ENCODE measurements at regions of chrX and their contacts with region 1.

Region 1: DNA sequence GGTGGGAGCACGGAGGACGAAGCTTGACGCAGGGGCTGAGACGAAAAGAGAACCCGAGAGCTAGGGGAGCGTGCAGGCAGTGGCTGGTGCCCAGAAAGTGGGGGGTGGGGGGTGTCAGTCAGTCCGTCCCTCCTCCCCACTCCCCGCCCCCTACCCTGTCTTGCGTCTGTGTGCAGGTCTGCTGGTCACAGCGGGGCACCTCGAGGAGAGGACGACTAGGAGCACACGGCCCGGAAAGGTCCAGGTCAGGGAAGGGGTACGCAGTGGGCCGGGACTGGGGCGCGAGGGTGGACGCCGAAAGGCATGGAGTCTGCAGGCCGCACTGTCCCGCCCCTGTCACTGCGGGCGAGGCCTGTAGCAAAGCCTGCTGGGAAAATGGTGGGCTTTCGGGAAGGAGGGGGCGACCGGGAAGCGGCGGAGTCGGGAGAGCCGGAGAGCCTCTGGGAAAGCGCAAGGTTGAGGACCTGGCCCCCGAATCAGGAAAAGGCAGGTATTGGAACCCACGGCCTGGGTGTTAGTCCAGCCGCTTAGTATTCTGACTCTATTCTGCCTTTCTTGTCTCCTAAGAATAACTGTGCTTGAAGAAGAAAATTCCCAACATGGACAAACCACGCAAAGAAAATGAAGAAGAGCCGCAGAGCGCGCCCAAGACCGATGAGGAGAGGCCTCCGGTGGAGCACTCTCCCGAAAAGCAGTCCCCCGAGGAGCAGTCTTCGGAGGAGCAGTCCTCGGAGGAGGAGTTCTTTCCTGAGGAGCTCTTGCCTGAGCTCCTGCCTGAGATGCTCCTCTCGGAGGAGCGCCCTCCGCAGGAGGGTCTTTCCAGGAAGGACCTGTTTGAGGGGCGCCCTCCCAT is 769 bp downstream of the TCEAL1 start:
- DNase-seq: peak; percentile 83
- ATAC-seq: peak; percentile 95

Region 2: GRCh38 chrX:103533511-103534216 is 95.9 kb before region 1 on chrX:
- intact Hi-C with region 1: loop called (anchors 10 kb)
- DNase-seq: peak; percentile 63
- ATAC-seq: peak; percentile 67

Region 3: GRCh38 chrX:103607364-103608305 is 21.9 kb before region 1 on chrX and contains the start of gene TCEAL3:
- intact Hi-C with region 1: loop called (anchors 2 kb)
- DNase-seq: peak; percentile 79
- ATAC-seq: peak; percentile 89
- total RNA-seq, gene TCEAL3: 19.3 TPM

Region 4: GRCh38 chrX:103686199-103687072 is 56.9 kb after region 1 on chrX and contains the start of gene MORF4L2:
- intact Hi-C with region 1: loop called (anchors 5 kb)
- DNase-seq: peak; percentile 91
- ATAC-seq: peak; percentile 94
- total RNA-seq, gene MORF4L2: 159 TPM